Dendritic cell treated with granulocyte-macrophage colony-stimulating factor and Interleukin-4, amounts not matched to agents 40 ng/mL and 50 ng/mL, for 4 days (primary cell): ENCODE measurements at regions of chr10 and their contacts with region 1.

Region 1: DNA sequence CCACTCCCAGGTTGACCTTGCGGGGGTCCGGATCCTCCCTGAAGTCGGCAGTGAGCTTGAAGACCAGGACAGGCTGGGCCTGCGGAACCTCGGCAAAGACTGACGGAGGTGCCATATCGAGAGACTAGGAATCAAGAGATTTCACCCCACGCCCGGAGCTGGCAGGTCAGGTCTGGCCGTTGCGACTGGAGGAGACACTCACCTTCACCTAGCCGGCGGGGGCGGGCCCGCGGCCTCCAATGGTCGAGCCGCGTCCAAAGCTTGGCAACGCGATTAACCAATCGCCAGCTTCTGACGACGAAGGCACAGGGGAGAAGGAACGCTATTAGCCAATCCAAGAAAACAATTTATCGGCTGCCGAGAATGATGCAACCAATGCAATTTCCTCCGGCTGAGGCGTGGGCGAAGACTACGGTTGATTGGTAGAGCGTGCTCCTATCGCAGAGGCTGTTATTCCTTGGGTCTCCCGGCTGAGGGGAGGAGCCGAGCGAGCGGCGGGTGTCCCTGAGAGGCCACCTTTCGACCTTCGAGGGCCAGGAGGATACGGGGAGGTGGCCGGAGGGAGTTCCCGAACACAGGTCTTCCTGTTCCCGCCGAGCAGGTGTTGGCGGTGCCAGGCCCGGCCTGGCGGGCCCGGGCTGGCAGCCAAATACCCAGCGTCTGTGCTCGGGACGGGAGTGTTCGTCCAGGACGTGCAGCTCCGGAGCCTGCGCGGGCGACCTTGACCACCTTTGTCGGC is at the start of gene GOT1:
- H3K4me3 Mint-ChIP-seq: peak within 1 kb of the TSS; percentile 94
- H3K27ac Mint-ChIP-seq: peak within 1 kb of the TSS; percentile 98
- H3K4me1 Mint-ChIP-seq: peaks cover 46% of the 10 kb centered on the region
- H3K27me3 Mint-ChIP-seq: no peaks in the 10 kb centered on the region

Region 2: GRCh38 chr10:99532687-99533495 is 102.3 kb after region 1 on chr10 and contains the start of gene NKX2-3:
- intact Hi-C with region 1: loop called (anchors 5 kb)
- H3K4me3 Mint-ChIP-seq: peak within 1 kb of the TSS; percentile 71
- H3K27ac Mint-ChIP-seq: no peak within 1 kb of the TSS
- H3K4me1 Mint-ChIP-seq: peaks cover 79% of the 10 kb centered on the region
- H3K27me3 Mint-ChIP-seq: peaks cover 97% of the 10 kb centered on the region